WTC11 (cell line): ENCODE measurements at regions of chr11 and their contacts with region 1.

Region 1: GRCh38 chr11:132312701-132313111 is 942.3 kb downstream of the NTM start:
- DNase-seq: peak; percentile 45
- ATAC-seq: peak; percentile 91
- H3K4me3 Mint-ChIP-seq: no peak overlapping the region
- H3K27ac Mint-ChIP-seq: no peak overlapping the region
- H3K4me1 Mint-ChIP-seq: peaks cover 6% of the 10 kb centered on the region; the same call in 1 of the 2 replicates
- H3K27me3 Mint-ChIP-seq: no peaks in the 10 kb centered on the region
- CTCF ChIP-seq: peak; percentile 73

Region 2: DNA sequence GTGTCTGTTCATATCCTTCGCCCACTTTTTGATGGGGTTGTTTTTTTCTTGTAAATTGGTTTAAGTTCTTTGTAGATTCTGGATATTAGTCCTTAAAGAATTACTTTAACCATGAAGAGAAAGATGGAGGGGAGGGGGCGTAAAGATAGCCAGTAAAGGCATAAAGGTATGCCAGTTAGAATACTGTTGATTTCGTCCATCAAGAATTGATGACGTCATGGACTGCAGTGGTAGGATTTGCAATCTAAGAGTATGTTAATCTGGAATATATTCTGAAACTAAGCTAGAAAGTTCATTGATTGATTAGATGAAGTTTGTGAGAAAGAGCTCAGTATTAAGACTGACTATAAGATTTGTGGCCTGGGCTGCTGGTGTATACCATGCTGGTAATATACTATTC is 86.2 kb before region 1 on chr11:
- CTCF ChIA-PET with region 1: no interaction called
- POLR2A ChIA-PET with region 1: no interaction called
- DNase-seq: no peak
- ATAC-seq: no peak
- H3K4me3 Mint-ChIP-seq: no peak overlapping the region
- H3K27ac Mint-ChIP-seq: no peak overlapping the region
- H3K4me1 Mint-ChIP-seq: peaks cover 4% of the 10 kb centered on the region; the same call in 1 of the 2 replicates
- H3K27me3 Mint-ChIP-seq: no peaks in the 10 kb centered on the region; the same call in 1 of the 2 replicates
- CTCF ChIP-seq: no peak

Region 3: GRCh38 chr11:132284611-132285010 is 28.1 kb before region 1 on chr11:
- CTCF ChIA-PET with region 1: interaction called, 10 read pairs
- POLR2A ChIA-PET with region 1: no interaction called
- DNase-seq: peak; percentile 11
- ATAC-seq: peak; percentile 25
- H3K4me3 Mint-ChIP-seq: no peak overlapping the region
- H3K27ac Mint-ChIP-seq: no peak overlapping the region
- H3K4me1 Mint-ChIP-seq: peaks cover 25% of the 10 kb centered on the region
- H3K27me3 Mint-ChIP-seq: no peaks in the 10 kb centered on the region
- CTCF ChIP-seq: no peak

Region 4: DNA sequence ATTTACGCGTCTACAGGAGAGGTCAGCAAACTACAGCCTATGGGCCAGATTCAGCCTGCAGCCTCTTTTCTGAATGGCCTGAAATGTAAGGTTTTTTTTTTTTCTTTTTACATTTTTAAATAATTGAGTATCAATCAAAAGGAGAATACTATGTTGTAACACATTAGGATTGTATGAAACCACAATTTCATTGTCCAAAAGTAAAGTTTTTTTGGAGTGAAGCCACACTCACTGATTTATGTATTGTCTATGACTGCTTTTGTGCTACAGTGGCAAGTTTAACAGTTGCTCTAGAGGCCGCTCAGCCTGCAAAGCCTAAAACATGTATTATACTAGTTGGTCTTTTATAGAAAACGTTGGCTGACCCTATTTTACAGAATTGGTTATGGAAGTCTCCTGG is 19.1 kb before region 1 on chr11:
- CTCF ChIA-PET with region 1: interaction called, 70 read pairs
- POLR2A ChIA-PET with region 1: no interaction called
- DNase-seq: no peak
- ATAC-seq: no peak
- H3K4me3 Mint-ChIP-seq: no peak overlapping the region
- H3K27ac Mint-ChIP-seq: no peak overlapping the region
- H3K4me1 Mint-ChIP-seq: peaks cover 3% of the 10 kb centered on the region; the same call in 1 of the 2 replicates
- H3K27me3 Mint-ChIP-seq: no peaks in the 10 kb centered on the region
- CTCF ChIP-seq: no peak

Region 5: GRCh38 chr11:132300283-132300682 is 12.4 kb before region 1 on chr11:
- CTCF ChIA-PET with region 1: interaction called, 70 read pairs
- POLR2A ChIA-PET with region 1: no interaction called
- DNase-seq: peak; percentile 36
- ATAC-seq: peak; percentile 97
- H3K4me3 Mint-ChIP-seq: no peak overlapping the region
- H3K27ac Mint-ChIP-seq: no peak overlapping the region
- H3K4me1 Mint-ChIP-seq: no peaks in the 10 kb centered on the region
- H3K27me3 Mint-ChIP-seq: no peaks in the 10 kb centered on the region
- CTCF ChIP-seq: peak; percentile 44; the same call in 1 of the 2 replicates

Region 6: DNA sequence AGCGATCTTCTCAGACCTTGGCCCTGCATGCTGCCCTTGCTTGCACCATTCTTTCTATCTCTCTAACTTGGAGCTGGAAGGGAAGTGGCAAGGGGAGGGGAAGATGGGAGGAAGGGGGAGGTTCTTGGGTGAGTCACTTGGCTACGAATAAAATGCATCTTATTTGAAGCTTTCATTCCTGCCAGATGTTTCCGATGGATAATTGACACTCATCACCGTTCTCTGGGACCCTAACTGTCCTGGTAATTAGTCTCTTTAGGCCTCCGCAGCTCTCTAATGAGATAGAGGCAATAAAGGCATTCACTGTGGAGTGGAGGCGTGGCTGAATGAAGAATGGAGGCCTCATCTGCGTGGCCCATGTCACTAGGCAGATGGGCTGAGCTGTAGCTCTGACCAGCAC is 17.8 kb after region 1 on chr11:
- CTCF ChIA-PET with region 1: interaction called, 14 read pairs
- POLR2A ChIA-PET with region 1: no interaction called
- DNase-seq: no peak
- ATAC-seq: no peak
- H3K4me3 Mint-ChIP-seq: no peak overlapping the region
- H3K27ac Mint-ChIP-seq: no peak overlapping the region
- H3K4me1 Mint-ChIP-seq: peaks cover 32% of the 10 kb centered on the region
- H3K27me3 Mint-ChIP-seq: peaks cover 2% of the 10 kb centered on the region; the same call in 1 of the 2 replicates
- CTCF ChIP-seq: no peak